ENCODE measurements at regions of chr11 and their contacts with region 1.

Region 1: GRCh38 chr11:72793425-72794367 is at the start of gene STARD10:
- DNase-seq: peak; percentile 97
- ATAC-seq: peak; percentile 93
- H3K4me3 Mint-ChIP-seq: peak within 1 kb of the TSS; percentile 84
- H3K27ac Mint-ChIP-seq: peak within 1 kb of the TSS; percentile 99
- H3K4me1 Mint-ChIP-seq: peaks cover 21% of the 10 kb centered on the region
- H3K27me3 Mint-ChIP-seq: no peaks in the 10 kb centered on the region
- total RNA-seq, gene STARD10: 8.3 to 12.9 TPM

Region 2: GRCh38 chr11:72727521-72727920 is 66.2 kb before region 1 on chr11:
- CTCF ChIA-PET with region 1: interaction called, 60 read pairs
- POLR2A ChIA-PET with region 1: interaction called, 6 read pairs
- intact Hi-C with region 1: loop called (anchors 1 kb)
- DNase-seq: no peak
- ATAC-seq: no peak
- H3K4me3 Mint-ChIP-seq: no peak overlapping the region
- H3K27ac Mint-ChIP-seq: no peak overlapping the region
- H3K4me1 Mint-ChIP-seq: peaks cover 17% of the 10 kb centered on the region
- H3K27me3 Mint-ChIP-seq: no peaks in the 10 kb centered on the region

Region 3: GRCh38 chr11:72736452-72737069 is 57.1 kb before region 1 on chr11:
- CTCF ChIA-PET with region 1: interaction called, 36 read pairs
- POLR2A ChIA-PET with region 1: interaction called, 3 read pairs
- intact Hi-C with region 1: loop called in 1 of 2 experiments (anchors 1 kb)
- DNase-seq: peak; percentile 84
- ATAC-seq: peak; percentile 92
- H3K4me3 Mint-ChIP-seq: peak overlapping the region; percentile 54
- H3K27ac Mint-ChIP-seq: peak overlapping the region; percentile 94
- H3K4me1 Mint-ChIP-seq: peaks cover 54% of the 10 kb centered on the region
- H3K27me3 Mint-ChIP-seq: no peaks in the 10 kb centered on the region

Region 4: GRCh38 chr11:72781313-72782050 is 12.2 kb before region 1 on chr11:
- CTCF ChIA-PET with region 1: interaction called, 26 read pairs
- POLR2A ChIA-PET with region 1: interaction called, 3 read pairs
- intact Hi-C with region 1: no loop called
- DNase-seq: peak; percentile 69
- ATAC-seq: peak; percentile 71
- H3K4me3 Mint-ChIP-seq: peak overlapping the region; percentile 62
- H3K27ac Mint-ChIP-seq: no peak overlapping the region
- H3K4me1 Mint-ChIP-seq: peaks cover 16% of the 10 kb centered on the region
- H3K27me3 Mint-ChIP-seq: no peaks in the 10 kb centered on the region